Naive thymus-derived CD4-positive, alpha-beta T cell (primary cell): ENCODE measurements at regions of chr1 and their contacts with region 1.

Region 1: DNA sequence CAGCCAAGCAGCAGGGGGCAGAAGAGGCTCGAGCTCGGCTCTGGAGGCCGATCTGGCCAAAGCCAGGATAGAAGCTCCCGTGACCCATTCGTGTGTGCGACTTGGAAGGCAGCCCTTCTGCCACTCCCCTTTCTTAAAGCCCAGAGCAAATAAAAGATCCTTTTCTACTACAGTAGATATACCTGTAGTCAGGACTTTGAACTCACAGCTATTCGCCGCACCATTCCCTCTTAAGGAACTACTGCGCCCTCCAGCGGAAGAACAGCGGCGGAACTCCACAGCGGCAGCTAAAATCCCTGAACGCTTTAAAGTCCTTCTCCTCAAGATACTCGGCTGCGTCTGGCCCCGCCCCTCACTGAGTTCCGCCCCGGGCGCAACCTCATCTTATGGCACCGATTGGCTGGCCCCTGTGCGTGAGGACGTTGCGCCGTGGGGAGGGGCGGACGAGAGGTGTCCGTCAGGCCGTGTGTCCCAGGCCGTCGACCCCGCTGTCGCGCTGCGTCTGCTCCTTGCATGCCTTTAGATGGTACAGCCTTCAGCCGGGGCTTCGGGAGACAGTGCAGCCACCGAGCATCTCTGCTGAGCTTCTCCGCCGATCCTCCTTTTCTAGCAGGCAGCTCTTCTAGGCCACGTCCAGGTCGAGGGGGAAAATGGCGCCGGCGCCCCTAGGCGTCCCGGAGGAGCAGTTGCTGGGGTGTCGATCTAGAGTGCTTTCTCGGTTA is at the start of gene LRIG2:
- DNase-seq: peak; percentile 90 to 97 (median 96)
- ATAC-seq: peak; percentile 98
- H3K4me3 ChIP-seq: peak within 1 kb of the TSS; percentile 83
- H3K4me3 Mint-ChIP-seq: peak within 1 kb of the TSS; percentile 95 to 100 (median 98)
- H3K27ac ChIP-seq: peak within 1 kb of the TSS; percentile 82
- H3K27ac Mint-ChIP-seq: peak within 1 kb of the TSS; percentile 91 to 98 (median 93)
- H3K4me1 ChIP-seq: peaks cover 10 to 18% of the 10 kb centered on the region in 2 donors
- H3K4me1 Mint-ChIP-seq: peaks cover 18 to 42% (median 29%) of the 10 kb centered on the region in 7 donors
- H3K27me3 ChIP-seq: no peaks in the 10 kb centered on the region
- H3K27me3 Mint-ChIP-seq: no peaks in the 10 kb centered on the region
- total RNA-seq, gene LRIG2: 15.5 to 27.0 (median 20.2) TPM

Region 2: DNA sequence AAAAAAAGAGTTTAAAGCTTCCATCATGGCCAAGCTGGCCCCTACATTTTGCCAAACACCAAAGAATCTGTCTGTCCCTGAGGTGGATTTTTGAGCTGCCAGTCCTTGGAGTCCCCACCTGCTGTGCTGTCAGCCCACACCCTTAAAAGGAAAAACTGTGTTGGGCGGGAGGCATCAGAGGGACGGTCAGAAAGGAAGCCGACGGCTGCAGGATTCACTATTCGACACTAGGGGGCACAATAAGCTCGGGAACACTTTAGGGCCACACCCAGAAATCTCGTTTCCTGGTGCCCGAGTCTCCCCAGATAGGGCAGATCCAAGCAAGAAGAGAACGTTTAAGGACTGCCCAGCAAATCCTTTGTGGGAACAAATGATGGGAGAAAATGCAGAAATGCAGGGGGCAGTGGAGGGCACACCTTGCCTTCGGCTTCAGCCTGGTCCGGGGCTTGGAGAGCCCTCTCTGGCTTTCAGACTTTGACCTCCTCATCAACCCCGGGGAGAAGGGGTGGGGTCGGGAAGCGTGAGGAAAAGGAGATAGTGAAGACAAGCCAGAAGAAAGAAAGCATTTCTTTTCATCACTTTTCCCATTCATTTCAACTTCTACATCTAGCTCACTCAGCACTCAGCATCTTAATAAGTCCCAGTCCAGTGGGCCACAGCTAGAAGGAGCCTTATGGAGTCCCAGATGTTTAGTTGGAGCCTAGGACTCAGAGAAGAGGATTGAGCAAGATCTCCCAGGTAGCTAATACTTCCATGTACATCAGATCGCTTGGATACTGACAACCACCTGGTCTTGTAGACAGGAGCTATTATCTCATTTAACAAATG is 681.9 kb before region 1 on chr1:
- CTCF ChIA-PET with region 1: interaction called, 5 read pairs
- POLR2A ChIA-PET with region 1: no interaction called
- intact Hi-C with region 1: loop called (anchors 2 to 10 kb)
- DNase-seq: peak; percentile 49 to 78 (median 75)
- ATAC-seq: peak; percentile 90
- H3K4me3 ChIP-seq: no peak overlapping the region
- H3K4me3 Mint-ChIP-seq: peak overlapping the region in 5 of 10 donors; percentile 7 to 78 (median 54)
- H3K27ac ChIP-seq: no peak overlapping the region
- H3K27ac Mint-ChIP-seq: peak overlapping the region in 1 of 9 donors; percentile 62
- H3K4me1 ChIP-seq: peaks cover 7 to 9% of the 10 kb centered on the region in 2 donors
- H3K4me1 Mint-ChIP-seq: peaks cover 7 to 34% (median 15%) of the 10 kb centered on the region in 7 donors
- H3K27me3 ChIP-seq: no peaks in the 10 kb centered on the region
- H3K27me3 Mint-ChIP-seq: peaks cover 9 to 50% (median 39%) of the 10 kb centered on the region in 5 donors

Region 3: DNA sequence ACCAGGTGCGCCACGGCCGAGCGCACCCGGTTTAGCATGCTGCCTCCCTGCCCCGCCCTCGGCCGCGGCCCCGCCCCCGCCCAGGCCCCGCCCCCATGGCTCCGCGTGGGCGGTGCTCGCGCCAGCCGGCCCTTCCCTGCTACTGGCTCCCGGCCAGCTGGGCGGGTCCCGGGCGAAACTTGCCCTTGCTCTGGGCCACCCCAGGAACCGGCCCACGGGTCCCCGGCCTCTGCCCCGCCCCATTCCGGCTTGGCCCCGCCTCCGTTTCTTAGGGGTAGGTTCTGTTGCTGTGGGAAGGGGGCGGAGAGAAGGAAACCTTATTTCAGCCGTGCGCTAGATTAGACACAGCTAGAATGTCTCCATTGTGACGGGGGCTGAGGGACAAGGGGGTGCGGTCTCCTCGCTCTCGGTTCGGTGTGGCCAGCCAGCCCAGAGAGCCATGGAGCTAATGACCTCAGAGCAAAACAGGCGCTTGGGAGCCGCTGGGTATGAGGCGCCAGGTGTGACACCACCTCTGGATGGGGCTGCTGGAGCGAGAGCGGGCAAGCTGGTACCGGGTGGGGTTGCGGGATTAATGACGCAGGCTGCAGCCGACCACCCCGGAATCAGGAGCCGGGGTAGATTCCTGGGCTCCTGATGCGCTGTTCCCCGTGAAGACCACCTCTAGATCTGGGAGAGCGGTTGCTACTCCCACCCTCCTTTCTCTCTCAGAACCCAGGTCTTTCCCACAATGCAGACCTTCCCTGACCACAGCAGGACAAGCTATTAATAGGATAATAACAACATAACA is 357.5 kb before region 1 on chr1 and contains the start of gene PPM1J:
- CTCF ChIA-PET with region 1: interaction called, 16 read pairs
- POLR2A ChIA-PET with region 1: interaction called, 6 read pairs
- intact Hi-C with region 1: loop called (anchors 2 kb)
- DNase-seq: peak; percentile 86 to 99 (median 91)
- ATAC-seq: peak; percentile 89
- H3K4me3 ChIP-seq: peak within 1 kb of the TSS; percentile 81
- H3K4me3 Mint-ChIP-seq: peak within 1 kb of the TSS; percentile 86 to 95 (median 92)
- H3K27ac ChIP-seq: peak within 1 kb of the TSS; percentile 34
- H3K27ac Mint-ChIP-seq: peak within 1 kb of the TSS in 8 of 9 donors; percentile 63 to 91 (median 82)
- H3K4me1 ChIP-seq: peaks cover 13% of the 10 kb centered on the region in 2 donors
- H3K4me1 Mint-ChIP-seq: peaks cover 17 to 37% (median 21%) of the 10 kb centered on the region in 7 donors
- H3K27me3 ChIP-seq: no peaks in the 10 kb centered on the region
- H3K27me3 Mint-ChIP-seq: peaks cover 0 to 45% (median 12%) of the 10 kb centered on the region in 5 donors
- total RNA-seq, gene PPM1J: 0.46 to 1.6 (median 0.50) TPM in 3 of 5 experiments, not detected in the others

Region 4: GRCh38 chr1:112849425-112850033 is 223.4 kb before region 1 on chr1:
- CTCF ChIA-PET with region 1: no interaction called
- POLR2A ChIA-PET with region 1: no interaction called
- intact Hi-C with region 1: no loop called
- DNase-seq: peak in 1 of 9 donors; percentile 7
- ATAC-seq: peak; percentile 24
- H3K4me3 ChIP-seq: no peak overlapping the region
- H3K4me3 Mint-ChIP-seq: peak overlapping the region in 5 of 10 donors; percentile 44 to 72 (median 51)
- H3K27ac ChIP-seq: no peak overlapping the region
- H3K27ac Mint-ChIP-seq: no peak overlapping the region
- H3K4me1 ChIP-seq: no peaks in the 10 kb centered on the region
- H3K4me1 Mint-ChIP-seq: peaks cover 0 to 9% (median 4%) of the 10 kb centered on the region in 7 donors
- H3K27me3 ChIP-seq: no peaks in the 10 kb centered on the region
- H3K27me3 Mint-ChIP-seq: peaks cover 39 to 68% (median 46%) of the 10 kb centered on the region in 5 donors

Region 5: GRCh38 chr1:113042285-113043143 is 30.4 kb before region 1 on chr1:
- CTCF ChIA-PET with region 1: no interaction called
- POLR2A ChIA-PET with region 1: interaction called, 3 read pairs
- intact Hi-C with region 1: loop called in 1 of 2 experiments (anchors 2 kb)
- DNase-seq: peak in 1 of 9 donors; percentile 13
- ATAC-seq: peak; percentile 83
- H3K4me3 ChIP-seq: no peak overlapping the region
- H3K4me3 Mint-ChIP-seq: no peak overlapping the region
- H3K27ac ChIP-seq: no peak overlapping the region
- H3K27ac Mint-ChIP-seq: peak overlapping the region in 2 of 9 donors; percentile 58 to 60
- H3K4me1 ChIP-seq: peaks cover 6 to 18% of the 10 kb centered on the region in 2 donors
- H3K4me1 Mint-ChIP-seq: peaks cover 16 to 37% (median 22%) of the 10 kb centered on the region in 7 donors
- H3K27me3 ChIP-seq: no peaks in the 10 kb centered on the region
- H3K27me3 Mint-ChIP-seq: peaks cover 0 to 10% (median 0%) of the 10 kb centered on the region in 5 donors

Region 6: GRCh38 chr1:113759333-113760101 is 686.6 kb after region 1 on chr1 and contains the start of gene PHTF1:
- CTCF ChIA-PET with region 1: no interaction called
- POLR2A ChIA-PET with region 1: no interaction called
- intact Hi-C with region 1: loop called in 1 of 2 experiments (anchors 5 kb)
- DNase-seq: peak in 8 of 9 donors; percentile 14 to 74 (median 23)
- ATAC-seq: peak; percentile 88
- H3K4me3 ChIP-seq: peak within 1 kb of the TSS; percentile 81
- H3K4me3 Mint-ChIP-seq: peak within 1 kb of the TSS; percentile 91 to 97 (median 93)
- H3K27ac ChIP-seq: peak within 1 kb of the TSS; percentile 74
- H3K27ac Mint-ChIP-seq: peak within 1 kb of the TSS; percentile 87 to 96 (median 90)
- H3K4me1 ChIP-seq: peaks cover 0 to 16% of the 10 kb centered on the region in 2 donors
- H3K4me1 Mint-ChIP-seq: peaks cover 0 to 36% (median 24%) of the 10 kb centered on the region in 7 donors
- H3K27me3 ChIP-seq: no peaks in the 10 kb centered on the region
- H3K27me3 Mint-ChIP-seq: no peaks in the 10 kb centered on the region
- total RNA-seq, gene PHTF1: 2.5 to 21.0 (median 7.1) TPM

Region 7: DNA sequence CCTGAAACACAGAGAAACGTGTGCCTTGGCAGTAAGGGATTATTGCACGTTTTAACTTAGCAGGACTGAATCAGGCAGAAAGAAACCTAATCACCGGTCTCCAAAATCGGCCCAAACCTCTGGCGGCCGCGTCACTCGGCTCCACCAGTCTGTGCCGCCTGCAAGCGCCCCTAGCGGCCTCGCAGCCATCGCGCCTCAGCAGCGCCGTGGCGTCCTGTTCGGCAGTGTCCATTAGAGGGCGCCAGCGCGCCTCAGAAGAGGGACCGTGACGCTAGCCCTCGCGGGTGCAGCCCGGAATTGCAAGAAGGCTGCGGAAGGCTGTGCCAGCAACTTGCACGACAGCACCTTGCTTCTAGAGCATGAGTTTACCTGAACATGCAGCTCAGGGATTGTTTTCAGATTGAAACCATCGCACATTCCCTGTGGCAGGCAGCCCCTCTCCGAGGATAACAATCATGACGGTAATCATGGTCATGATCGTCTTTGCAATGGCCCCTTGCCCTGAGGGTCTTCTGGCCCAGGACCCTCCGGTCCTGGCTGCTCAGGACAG is 1273.6 kb after region 1 on chr1:
- CTCF ChIA-PET with region 1: no interaction called
- POLR2A ChIA-PET with region 1: no interaction called
- intact Hi-C with region 1: loop called in 1 of 2 experiments (anchors 5 kb)
- DNase-seq: peak; percentile 91 to 99 (median 98)
- ATAC-seq: peak; percentile 100
- H3K4me3 ChIP-seq: peak overlapping the region; percentile 65
- H3K4me3 Mint-ChIP-seq: peak overlapping the region; percentile 89 to 98 (median 92)
- H3K27ac ChIP-seq: peak overlapping the region; percentile 53
- H3K27ac Mint-ChIP-seq: peak overlapping the region; percentile 86 to 99 (median 91)
- H3K4me1 ChIP-seq: peaks cover 29 to 38% of the 10 kb centered on the region in 2 donors
- H3K4me1 Mint-ChIP-seq: peaks cover 23 to 46% (median 33%) of the 10 kb centered on the region in 7 donors
- H3K27me3 ChIP-seq: no peaks in the 10 kb centered on the region
- H3K27me3 Mint-ChIP-seq: no peaks in the 10 kb centered on the region

Region 8: DNA sequence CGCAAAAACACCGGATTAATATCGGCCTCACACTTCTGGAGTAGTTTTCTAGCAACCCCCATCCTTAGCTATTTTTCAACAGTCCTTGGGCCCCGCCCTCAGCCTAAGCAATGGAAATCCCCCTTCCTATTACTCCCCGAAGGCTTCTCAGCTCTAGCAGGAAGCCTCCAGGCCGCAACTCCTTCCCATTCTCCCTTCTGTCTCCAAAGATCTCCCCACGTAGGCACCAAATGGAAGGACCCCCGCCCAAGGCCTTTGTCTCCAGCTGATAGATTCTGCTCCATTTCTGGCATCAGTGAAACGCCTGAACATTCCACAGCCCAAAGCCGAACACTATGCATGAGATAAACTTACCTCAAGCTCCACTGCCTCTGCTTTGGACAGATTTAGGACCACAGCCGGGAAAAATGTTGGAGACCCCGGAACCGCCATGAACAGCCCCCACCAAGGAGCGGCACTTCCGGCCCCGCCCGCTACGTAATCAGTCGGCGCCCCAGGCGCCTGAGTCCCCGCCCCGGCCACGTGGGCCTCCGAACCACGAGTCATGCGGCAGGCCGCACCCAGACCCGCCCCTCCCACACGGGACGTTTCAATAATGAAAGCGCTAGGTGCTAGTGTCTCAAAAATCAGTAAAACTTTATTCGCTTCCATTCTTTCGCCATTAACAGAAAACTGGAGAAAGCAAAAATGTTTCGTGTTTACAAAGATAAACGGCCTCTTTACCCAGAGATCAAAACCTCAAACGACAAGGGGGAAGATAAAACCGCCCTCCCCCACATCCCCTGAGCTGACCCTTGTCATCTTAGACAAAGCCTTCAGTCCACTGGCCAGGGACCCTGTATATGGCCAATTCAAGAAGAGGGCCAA is 1643.6 kb after region 1 on chr1 and contains the start of gene NRAS:
- CTCF ChIA-PET with region 1: no interaction called
- POLR2A ChIA-PET with region 1: no interaction called
- intact Hi-C with region 1: loop called in 1 of 2 experiments (anchors 2 kb)
- DNase-seq: peak; percentile 90 to 96 (median 94)
- ATAC-seq: peak; percentile 98
- H3K4me3 ChIP-seq: peak within 1 kb of the TSS; percentile 98
- H3K4me3 Mint-ChIP-seq: peak within 1 kb of the TSS; percentile 91 to 100 (median 96)
- H3K27ac ChIP-seq: peak within 1 kb of the TSS; percentile 98
- H3K27ac Mint-ChIP-seq: peak within 1 kb of the TSS; percentile 93 to 99 (median 97)
- H3K4me1 ChIP-seq: peaks cover 17 to 20% of the 10 kb centered on the region in 2 donors
- H3K4me1 Mint-ChIP-seq: peaks cover 10 to 34% (median 25%) of the 10 kb centered on the region in 7 donors
- H3K27me3 ChIP-seq: no peaks in the 10 kb centered on the region
- H3K27me3 Mint-ChIP-seq: no peaks in the 10 kb centered on the region
- total RNA-seq, gene NRAS: 22.3 to 56.0 (median 25.0) TPM